Activated T-helper 2 cell treated with anti-CD3 and anti-CD28 coated beads, Interferon-gamma antibody, Interleukin-2, Interleukin-4, amounts not matched to agents 10 μg/mL and 5 μg/mL and 100 μg/mL, durations not matched to agents 14 hours and 24 hours and 36 hours (primary cell): ENCODE measurements at regions of chr21 and their contacts with region 1.

Region 1: GRCh38 chr21:43718872-43719747 is at the start of gene PDXK:
- DNase-seq: peak; percentile 80
- H3K4me3 Mint-ChIP-seq: peak within 1 kb of the TSS; percentile 88
- H3K27ac Mint-ChIP-seq: peak within 1 kb of the TSS; percentile 74
- H3K4me1 Mint-ChIP-seq: peaks cover 18% of the 10 kb centered on the region
- H3K27me3 Mint-ChIP-seq: peaks cover 8% of the 10 kb centered on the region
- total RNA-seq, gene PDXK: 124 and 136 TPM in 2 replicates

Region 2: GRCh38 chr21:43775795-43776430 is 56.8 kb after region 1 on chr21 and contains the start of gene CSTB:
- intact Hi-C with region 1: loop called (anchors 1 kb)
- DNase-seq: peak; percentile 84
- H3K4me3 Mint-ChIP-seq: peak within 1 kb of the TSS; percentile 96
- H3K27ac Mint-ChIP-seq: peak within 1 kb of the TSS; percentile 78
- H3K4me1 Mint-ChIP-seq: peaks cover 46% of the 10 kb centered on the region
- H3K27me3 Mint-ChIP-seq: no peaks in the 10 kb centered on the region
- total RNA-seq, gene CSTB: 55.8 TPM in 2 replicates

Region 3: GRCh38 chr21:43789276-43790009 is 70.3 kb after region 1 on chr21 and contains the start of gene RRP1:
- intact Hi-C with region 1: loop called (anchors 1 kb)
- DNase-seq: peak; percentile 93
- H3K4me3 Mint-ChIP-seq: peak within 1 kb of the TSS; percentile 98
- H3K27ac Mint-ChIP-seq: peak within 1 kb of the TSS; percentile 94
- H3K4me1 Mint-ChIP-seq: peaks cover 21% of the 10 kb centered on the region
- H3K27me3 Mint-ChIP-seq: no peaks in the 10 kb centered on the region
- total RNA-seq, gene RRP1: 67.1 and 71.7 TPM in 2 replicates